Naive thymus-derived CD4-positive, alpha-beta T cell (primary cell): ENCODE measurements at regions of chr5 and their contacts with region 1.

Region 1: DNA sequence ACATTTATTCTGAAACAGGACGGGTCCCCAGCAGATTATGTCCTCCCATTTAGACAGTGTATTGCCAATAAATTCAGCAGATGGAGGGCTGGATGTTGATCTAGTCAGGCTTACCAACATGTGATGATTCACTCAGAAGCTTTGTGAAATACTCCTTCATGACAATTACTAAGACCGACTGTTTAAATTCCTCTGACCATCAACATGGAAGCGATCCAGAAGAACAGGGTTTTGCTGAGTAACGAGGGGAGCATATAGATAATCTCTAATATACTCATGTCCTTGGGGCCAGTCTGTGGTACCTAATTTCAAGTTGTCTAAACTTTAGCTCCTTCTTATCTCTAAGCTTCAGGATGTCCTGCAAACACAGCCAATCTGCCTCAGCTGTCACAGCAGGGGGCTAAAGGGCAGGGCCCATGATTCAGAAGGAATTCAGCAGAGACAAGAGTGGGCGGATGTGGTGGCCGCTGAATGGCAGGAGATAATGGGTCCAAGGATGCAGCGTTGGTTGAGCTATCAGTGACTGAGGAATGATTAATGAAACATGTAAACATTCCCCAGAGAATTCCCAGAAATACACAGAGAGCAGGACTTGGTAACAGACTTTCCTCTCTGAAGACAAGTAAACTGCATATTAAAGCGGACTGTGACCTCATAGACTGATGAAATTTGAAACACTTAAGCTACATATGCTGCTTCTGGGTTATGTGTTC is 109.4 kb downstream of the ANKRD55 start:
- DNase-seq: no peak
- ATAC-seq: peak; percentile 29
- H3K4me3 ChIP-seq: no peak overlapping the region
- H3K4me3 Mint-ChIP-seq: peak overlapping the region in 3 of 10 donors; percentile 3 to 38 (median 29)
- H3K27ac ChIP-seq: no peak overlapping the region
- H3K27ac Mint-ChIP-seq: peak overlapping the region in 8 of 9 donors; percentile 32 to 89 (median 74)
- H3K4me1 ChIP-seq: peaks cover 0 to 42% of the 10 kb centered on the region in 2 donors
- H3K4me1 Mint-ChIP-seq: peaks cover 21 to 59% (median 45%) of the 10 kb centered on the region in 7 donors
- H3K27me3 ChIP-seq: no peaks in the 10 kb centered on the region
- H3K27me3 Mint-ChIP-seq: no peaks in the 10 kb centered on the region

Region 2: DNA sequence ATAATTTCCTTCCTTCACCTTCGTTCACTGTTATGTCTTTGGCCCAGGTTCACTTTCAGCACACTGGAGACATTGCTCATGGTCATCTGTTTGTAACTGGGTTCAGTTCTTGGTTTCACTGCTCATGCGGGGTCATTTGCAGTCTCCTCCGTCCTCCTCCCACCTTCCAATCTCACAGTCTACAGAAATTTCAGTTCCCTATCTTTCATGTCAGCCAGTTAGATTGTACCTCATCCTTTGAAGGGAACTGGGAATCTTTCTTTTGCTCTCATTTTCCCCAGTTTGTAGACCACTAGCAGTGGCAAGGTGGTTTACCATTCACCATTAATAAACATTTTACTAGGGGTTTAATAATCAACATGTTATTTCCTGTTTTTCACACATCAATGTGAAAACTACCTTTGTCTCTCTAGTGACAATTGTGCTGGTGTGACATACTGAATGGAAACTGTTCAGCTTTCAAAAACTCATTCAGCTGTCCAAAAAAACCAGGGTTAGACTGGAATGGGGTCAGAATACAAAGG is 28.0 kb before region 1 on chr5:
- CTCF ChIA-PET with region 1: interaction called, 3 read pairs
- POLR2A ChIA-PET with region 1: interaction called, 4 read pairs
- intact Hi-C with region 1: loop called in 1 of 2 experiments (anchors 2 kb)
- DNase-seq: no peak
- ATAC-seq: no peak
- H3K4me3 ChIP-seq: no peak overlapping the region
- H3K4me3 Mint-ChIP-seq: peak overlapping the region in 9 of 10 donors; percentile 32 to 77 (median 56)
- H3K27ac ChIP-seq: peak overlapping the region; percentile 54
- H3K27ac Mint-ChIP-seq: peak overlapping the region; percentile 66 to 100 (median 91)
- H3K4me1 ChIP-seq: peaks cover 0 to 94% of the 10 kb centered on the region in 2 donors
- H3K4me1 Mint-ChIP-seq: peaks cover 56 to 97% (median 86%) of the 10 kb centered on the region in 7 donors
- H3K27me3 ChIP-seq: no peaks in the 10 kb centered on the region
- H3K27me3 Mint-ChIP-seq: no peaks in the 10 kb centered on the region

Region 3: GRCh38 chr5:56112526-56113121 is 11.1 kb before region 1 on chr5:
- CTCF ChIA-PET with region 1: interaction called, 3 read pairs
- POLR2A ChIA-PET with region 1: interaction called, 78 read pairs
- intact Hi-C with region 1: loop called in 1 of 2 experiments (anchors 1 kb)
- DNase-seq: no peak
- ATAC-seq: no peak
- H3K4me3 ChIP-seq: no peak overlapping the region
- H3K4me3 Mint-ChIP-seq: peak overlapping the region in 1 of 10 donors; percentile 38
- H3K27ac ChIP-seq: no peak overlapping the region
- H3K27ac Mint-ChIP-seq: peak overlapping the region in 3 of 9 donors; percentile 32 to 73 (median 65)
- H3K4me1 ChIP-seq: peaks cover 0 to 18% of the 10 kb centered on the region in 2 donors
- H3K4me1 Mint-ChIP-seq: peaks cover 7 to 55% (median 31%) of the 10 kb centered on the region in 7 donors
- H3K27me3 ChIP-seq: no peaks in the 10 kb centered on the region
- H3K27me3 Mint-ChIP-seq: no peaks in the 10 kb centered on the region

Region 4: GRCh38 chr5:56148453-56148971 is 24.8 kb after region 1 on chr5:
- CTCF ChIA-PET with region 1: no interaction called
- POLR2A ChIA-PET with region 1: interaction called, 10 read pairs
- intact Hi-C with region 1: loop called (anchors 1 kb)
- DNase-seq: peak in 8 of 9 donors; percentile 52 to 84 (median 70)
- ATAC-seq: peak; percentile 87
- H3K4me3 ChIP-seq: peak overlapping the region; percentile 18
- H3K4me3 Mint-ChIP-seq: peak overlapping the region; percentile 45 to 74 (median 62)
- H3K27ac ChIP-seq: peak overlapping the region; percentile 61
- H3K27ac Mint-ChIP-seq: peak overlapping the region; percentile 87 to 97 (median 94)
- H3K4me1 ChIP-seq: peaks cover 0 to 76% of the 10 kb centered on the region in 2 donors
- H3K4me1 Mint-ChIP-seq: peaks cover 39 to 76% (median 70%) of the 10 kb centered on the region in 7 donors
- H3K27me3 ChIP-seq: no peaks in the 10 kb centered on the region
- H3K27me3 Mint-ChIP-seq: peaks cover 0 to 2% (median 0%) of the 10 kb centered on the region in 5 donors